Naive thymus-derived CD4-positive, alpha-beta T cell (primary cell): ENCODE measurements at regions of chr3 and their contacts with region 1.

Region 1: DNA sequence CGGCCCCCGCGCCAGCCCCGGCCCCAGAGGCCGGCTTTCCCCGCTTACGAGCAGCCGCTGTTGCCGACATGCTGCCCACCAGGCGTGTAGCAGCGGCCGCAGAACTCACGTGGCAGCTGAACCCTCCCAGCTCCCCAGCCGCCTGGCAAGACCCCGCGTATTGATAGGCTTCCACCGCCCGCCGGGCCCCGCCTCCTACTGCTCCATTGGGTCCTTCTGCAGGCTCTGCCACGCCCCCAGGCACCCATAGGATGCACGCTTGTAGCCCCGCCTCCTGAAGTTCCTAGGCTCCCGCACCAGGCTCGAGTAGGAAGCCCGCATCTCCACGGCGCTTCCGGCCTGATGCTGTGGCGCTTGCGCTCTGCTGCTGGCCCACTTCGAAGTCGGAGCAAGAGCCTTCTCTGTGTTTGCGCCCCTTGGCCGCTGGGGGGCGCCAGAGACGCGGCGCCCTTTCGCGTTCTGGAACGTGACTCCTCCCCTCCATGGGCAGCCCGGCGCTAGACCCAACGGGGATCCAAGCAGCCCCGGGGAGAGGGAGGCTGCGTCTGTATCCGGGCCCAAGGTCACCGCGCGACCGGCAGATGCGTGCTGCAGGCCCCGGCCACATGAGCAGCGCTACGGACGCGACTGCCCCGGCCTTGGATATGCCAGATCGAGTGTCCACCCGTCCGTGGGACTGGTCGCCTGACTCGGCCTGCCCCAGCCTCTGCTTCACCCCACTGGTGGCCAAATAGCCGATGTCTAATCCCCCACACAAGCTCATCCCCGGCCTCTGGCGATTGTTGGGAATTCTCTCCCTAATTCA is at the starts of genes PARP3 and RRP9:
- DNase-seq: peak; percentile 97 to 100 (median 99)
- ATAC-seq: peak; percentile 98
- H3K4me3 ChIP-seq: peak within 1 kb of the TSS; percentile 78
- H3K4me3 Mint-ChIP-seq: peak within 1 kb of the TSS; percentile 72 to 94 (median 90)
- H3K27ac ChIP-seq: peak within 1 kb of the TSS; percentile 80
- H3K27ac Mint-ChIP-seq: peak within 1 kb of the TSS; percentile 78 to 92 (median 89)
- H3K4me1 ChIP-seq: peaks cover 19 to 23% of the 10 kb centered on the region in 2 donors
- H3K4me1 Mint-ChIP-seq: peaks cover 22 to 40% (median 31%) of the 10 kb centered on the region in 7 donors
- H3K27me3 ChIP-seq: no peaks in the 10 kb centered on the region
- H3K27me3 Mint-ChIP-seq: no peaks in the 10 kb centered on the region
- total RNA-seq, gene PARP3: 7.7 to 21.5 (median 11.2) TPM
- total RNA-seq, gene RRP9: 10.2 to 34.2 (median 16.6) TPM

Region 2: DNA sequence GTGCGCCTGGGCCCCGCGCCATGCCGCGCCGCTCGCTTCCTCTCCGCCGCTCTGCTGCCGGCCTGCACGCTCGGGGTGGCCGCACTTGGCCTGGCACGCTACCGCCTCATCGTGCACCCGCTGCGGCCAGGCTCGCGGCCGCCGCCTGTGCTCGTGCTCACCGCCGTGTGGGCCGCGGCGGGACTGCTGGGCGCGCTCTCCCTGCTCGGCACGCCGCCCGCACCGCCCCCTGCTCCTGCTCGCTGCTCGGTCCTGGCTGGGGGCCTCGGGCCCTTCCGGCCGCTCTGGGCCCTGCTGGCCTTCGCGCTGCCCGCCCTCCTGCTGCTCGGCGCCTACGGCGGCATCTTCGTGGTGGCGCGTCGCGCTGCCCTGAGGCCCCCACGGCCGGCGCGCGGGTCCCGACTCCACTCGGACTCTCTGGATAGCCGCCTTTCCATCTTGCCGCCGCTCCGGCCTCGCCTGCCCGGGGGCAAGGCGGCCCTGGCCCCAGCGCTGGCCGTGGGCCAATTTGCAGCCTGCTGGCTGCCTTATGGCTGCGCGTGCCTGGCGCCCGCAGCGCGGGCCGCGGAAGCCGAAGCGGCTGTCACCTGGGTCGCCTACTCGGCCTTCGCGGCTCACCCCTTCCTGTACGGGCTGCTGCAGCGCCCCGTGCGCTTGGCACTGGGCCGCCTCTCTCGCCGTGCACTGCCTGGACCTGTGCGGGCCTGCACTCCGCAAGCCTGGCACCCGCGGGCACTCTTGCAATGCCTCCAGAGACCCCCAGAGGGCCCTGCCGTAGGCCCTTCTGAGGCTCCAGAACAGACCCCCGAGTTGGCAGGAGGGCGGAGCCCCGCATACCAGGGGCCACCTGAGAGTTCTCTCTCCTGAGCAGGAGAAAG is 14.1 kb after region 1 on chr3:
- CTCF ChIA-PET with region 1: no interaction called
- POLR2A ChIA-PET with region 1: interaction called, 3 read pairs
- intact Hi-C with region 1: loop called in 1 of 2 experiments (anchors 1 kb)
- DNase-seq: peak in 7 of 9 donors; percentile 26 to 40 (median 34)
- ATAC-seq: peak; percentile 77
- H3K4me3 ChIP-seq: peak overlapping the region; percentile 44
- H3K4me3 Mint-ChIP-seq: peak overlapping the region; percentile 12 to 80 (median 59)
- H3K27ac ChIP-seq: no peak overlapping the region
- H3K27ac Mint-ChIP-seq: no peak overlapping the region
- H3K4me1 ChIP-seq: peaks cover 0 to 7% of the 10 kb centered on the region in 2 donors
- H3K4me1 Mint-ChIP-seq: peaks cover 0 to 6% (median 4%) of the 10 kb centered on the region in 7 donors
- H3K27me3 ChIP-seq: peaks cover 3 to 4% of the 10 kb centered on the region in 2 donors
- H3K27me3 Mint-ChIP-seq: peaks cover 16 to 47% (median 21%) of the 10 kb centered on the region in 5 donors

Region 3: GRCh38 chr3:51995346-51996163 is 53.6 kb after region 1 on chr3 and contains the start of gene RPL29:
- CTCF ChIA-PET with region 1: interaction called, 5 read pairs
- POLR2A ChIA-PET with region 1: interaction called, 13 read pairs
- intact Hi-C with region 1: loop called (anchors 1 kb)
- DNase-seq: peak; percentile 80 to 95 (median 92)
- ATAC-seq: peak; percentile 99
- H3K4me3 ChIP-seq: peak within 1 kb of the TSS; percentile 98
- H3K4me3 Mint-ChIP-seq: peak within 1 kb of the TSS; percentile 92 to 100 (median 98)
- H3K27ac ChIP-seq: peak within 1 kb of the TSS; percentile 95
- H3K27ac Mint-ChIP-seq: peak within 1 kb of the TSS; percentile 98 to 100 (median 100)
- H3K4me1 ChIP-seq: peaks cover 13 to 15% of the 10 kb centered on the region in 2 donors
- H3K4me1 Mint-ChIP-seq: peaks cover 19 to 44% (median 31%) of the 10 kb centered on the region in 7 donors
- H3K27me3 ChIP-seq: no peaks in the 10 kb centered on the region
- H3K27me3 Mint-ChIP-seq: peaks cover 0 to 16% (median 0%) of the 10 kb centered on the region in 5 donors
- total RNA-seq, gene RPL29: 1,152 to 1,744 (median 1,537) TPM

Region 4: DNA sequence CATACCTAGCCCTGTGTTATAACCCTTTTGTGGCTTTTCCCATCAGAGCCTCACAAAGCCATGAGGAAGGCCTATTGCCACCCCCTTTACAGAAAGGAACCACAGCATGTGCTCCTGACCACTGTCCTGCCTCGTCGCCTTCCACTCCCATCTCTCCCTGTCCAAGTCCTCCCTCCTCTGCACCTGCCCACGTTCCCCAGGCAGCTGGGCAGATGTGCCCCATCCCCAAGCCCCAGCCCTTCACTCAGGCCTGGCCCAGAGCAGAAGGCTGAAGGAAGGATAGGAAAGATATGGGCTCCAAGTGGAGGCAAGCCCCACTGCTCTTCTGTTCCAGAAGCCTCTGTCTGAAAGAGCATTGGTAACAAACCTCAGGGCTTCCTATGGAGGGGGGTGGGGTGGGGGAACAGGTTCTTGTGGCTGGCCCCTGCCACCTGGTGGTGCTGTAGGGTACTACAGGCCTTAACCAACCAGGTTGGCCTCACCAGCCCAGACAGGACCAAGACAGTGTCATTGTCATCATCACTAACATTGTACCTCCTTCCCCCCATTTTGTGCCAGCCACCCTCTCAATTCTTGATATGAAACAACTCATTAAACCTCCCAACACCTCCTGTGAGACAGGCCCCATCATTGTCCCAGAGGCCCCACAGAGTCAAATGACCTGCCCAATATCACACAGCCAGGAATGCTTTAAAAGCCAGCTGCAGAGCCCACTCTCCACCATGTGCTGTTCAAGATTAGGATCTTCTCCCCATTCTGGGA is 202.2 kb after region 1 on chr3:
- CTCF ChIA-PET with region 1: interaction called, 8 read pairs
- POLR2A ChIA-PET with region 1: no interaction called
- intact Hi-C with region 1: loop called (anchors 1 kb)
- DNase-seq: peak; percentile 70 to 88 (median 82)
- ATAC-seq: peak; percentile 98
- H3K4me3 ChIP-seq: no peak overlapping the region
- H3K4me3 Mint-ChIP-seq: peak overlapping the region in 1 of 10 donors; percentile 6
- H3K27ac ChIP-seq: no peak overlapping the region
- H3K27ac Mint-ChIP-seq: peak overlapping the region in 5 of 9 donors; percentile 38 to 80 (median 64)
- H3K4me1 ChIP-seq: peaks cover 5 to 6% of the 10 kb centered on the region in 2 donors
- H3K4me1 Mint-ChIP-seq: peaks cover 5 to 10% (median 7%) of the 10 kb centered on the region in 7 donors
- H3K27me3 ChIP-seq: no peaks in the 10 kb centered on the region
- H3K27me3 Mint-ChIP-seq: no peaks in the 10 kb centered on the region

Region 5: GRCh38 chr3:52317208-52318000 is 375.4 kb after region 1 on chr3:
- CTCF ChIA-PET with region 1: no interaction called
- POLR2A ChIA-PET with region 1: no interaction called
- intact Hi-C with region 1: loop called in 1 of 2 experiments (anchors 1 kb)
- DNase-seq: peak; percentile 61 to 78 (median 74)
- ATAC-seq: peak; percentile 92
- H3K4me3 ChIP-seq: peak overlapping the region; percentile 46
- H3K4me3 Mint-ChIP-seq: peak overlapping the region; percentile 68 to 84 (median 76)
- H3K27ac ChIP-seq: peak overlapping the region; percentile 17
- H3K27ac Mint-ChIP-seq: peak overlapping the region in 8 of 9 donors; percentile 38 to 80 (median 66)
- H3K4me1 ChIP-seq: peaks cover 9 to 11% of the 10 kb centered on the region in 2 donors
- H3K4me1 Mint-ChIP-seq: peaks cover 0 to 22% (median 17%) of the 10 kb centered on the region in 7 donors
- H3K27me3 ChIP-seq: no peaks in the 10 kb centered on the region
- H3K27me3 Mint-ChIP-seq: no peaks in the 10 kb centered on the region

Region 6: GRCh38 chr3:52561028-52561747 is 619.2 kb after region 1 on chr3:
- CTCF ChIA-PET with region 1: no interaction called
- POLR2A ChIA-PET with region 1: no interaction called
- intact Hi-C with region 1: no loop called
- DNase-seq: no peak
- ATAC-seq: no peak
- H3K4me3 ChIP-seq: no peak overlapping the region
- H3K4me3 Mint-ChIP-seq: no peak overlapping the region
- H3K27ac ChIP-seq: no peak overlapping the region
- H3K27ac Mint-ChIP-seq: no peak overlapping the region
- H3K4me1 ChIP-seq: no peaks in the 10 kb centered on the region
- H3K4me1 Mint-ChIP-seq: peaks cover 0 to 7% (median 3%) of the 10 kb centered on the region in 7 donors
- H3K27me3 ChIP-seq: no peaks in the 10 kb centered on the region
- H3K27me3 Mint-ChIP-seq: no peaks in the 10 kb centered on the region